MCF 10A (cell line): ENCODE measurements at regions of chr3 and their contacts with region 1.

Region 1: GRCh38 chr3:142723968-142724681 is at the start of gene TRPC1:
- DNase-seq: peak; percentile 83
- H3K4me3 Mint-ChIP-seq: peak within 1 kb of the TSS; percentile 91
- H3K27ac Mint-ChIP-seq: peak within 1 kb of the TSS; percentile 86
- H3K4me1 Mint-ChIP-seq: peaks cover 7% of the 10 kb centered on the region
- H3K27me3 Mint-ChIP-seq: no peaks in the 10 kb centered on the region
- CTCF ChIP-seq: no peak
- total RNA-seq, gene TRPC1: 9.2 and 15.2 TPM in 2 replicates

Region 2: DNA sequence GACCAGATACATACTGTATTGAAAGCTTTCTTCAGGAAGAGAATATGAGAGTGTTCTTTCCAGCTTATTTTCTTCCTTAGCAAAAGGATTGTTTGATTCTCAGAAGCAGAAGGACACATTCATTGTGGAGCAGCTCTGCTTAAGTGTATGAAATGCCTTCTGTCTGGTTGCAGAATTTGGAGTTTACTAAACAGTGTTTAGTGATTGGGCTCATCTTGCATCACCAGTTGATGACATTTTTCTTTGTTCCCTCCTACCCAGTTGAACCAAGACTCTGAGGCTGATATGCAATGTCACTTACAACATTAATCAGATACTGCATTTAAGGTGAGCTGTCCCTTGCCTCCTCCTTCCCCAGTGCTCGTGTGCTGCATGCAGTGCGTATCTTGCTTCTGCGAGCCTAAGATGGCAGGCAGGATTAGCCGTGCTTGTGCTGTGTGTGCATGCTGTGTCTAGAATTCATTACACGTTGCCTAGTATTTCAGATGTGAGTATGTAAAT is 1337.5 kb before region 1 on chr3:
- CTCF ChIA-PET with region 1: no interaction called
- POLR2A ChIA-PET with region 1: no interaction called
- intact Hi-C with region 1: no loop called
- DNase-seq: no peak
- H3K4me3 Mint-ChIP-seq: peak overlapping the region; percentile 28
- H3K27ac Mint-ChIP-seq: peak overlapping the region; percentile 73
- H3K4me1 Mint-ChIP-seq: peaks cover 46% of the 10 kb centered on the region
- H3K27me3 Mint-ChIP-seq: no peaks in the 10 kb centered on the region
- CTCF ChIP-seq: no peak

Region 3: GRCh38 chr3:142356818-142357217 is 367.3 kb before region 1 on chr3:
- CTCF ChIA-PET with region 1: no interaction called
- POLR2A ChIA-PET with region 1: no interaction called
- intact Hi-C with region 1: no loop called
- DNase-seq: no peak
- H3K4me3 Mint-ChIP-seq: no peak overlapping the region
- H3K27ac Mint-ChIP-seq: no peak overlapping the region
- H3K4me1 Mint-ChIP-seq: no peaks in the 10 kb centered on the region
- H3K27me3 Mint-ChIP-seq: no peaks in the 10 kb centered on the region
- CTCF ChIP-seq: no peak

Region 4: GRCh38 chr3:142568393-142569017 is 155.6 kb before region 1 on chr3:
- CTCF ChIA-PET with region 1: no interaction called
- POLR2A ChIA-PET with region 1: no interaction called
- intact Hi-C with region 1: no loop called
- DNase-seq: no peak
- H3K4me3 Mint-ChIP-seq: no peak overlapping the region
- H3K27ac Mint-ChIP-seq: no peak overlapping the region
- H3K4me1 Mint-ChIP-seq: no peaks in the 10 kb centered on the region
- H3K27me3 Mint-ChIP-seq: no peaks in the 10 kb centered on the region
- CTCF ChIP-seq: no peak

Region 5: DNA sequence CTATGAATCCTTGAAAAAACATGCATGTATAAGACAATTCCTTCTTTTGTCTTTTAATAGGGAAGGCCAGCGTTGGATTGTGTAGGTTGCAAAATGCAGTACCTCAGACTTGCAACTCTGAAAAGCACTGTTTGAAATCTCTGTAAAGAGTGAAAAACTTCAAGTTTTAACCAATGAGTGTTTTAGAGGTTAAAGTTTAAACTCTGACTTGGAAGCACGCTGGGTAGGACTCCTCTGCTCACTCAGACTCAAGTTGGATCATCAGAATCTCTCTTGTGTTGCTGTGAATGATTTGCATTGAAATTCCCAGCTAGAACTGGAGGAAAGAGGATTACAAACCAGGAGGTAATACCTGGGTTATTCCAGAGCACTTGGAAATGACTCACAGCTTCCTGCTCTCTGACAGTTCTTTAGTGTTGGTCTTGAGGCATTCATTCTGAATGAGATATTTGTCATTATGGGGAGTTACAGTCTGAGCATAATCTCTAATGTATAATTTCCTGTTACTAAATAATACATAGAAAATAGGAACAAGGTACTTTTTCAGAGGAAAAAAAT is 78.8 kb before region 1 on chr3:
- CTCF ChIA-PET with region 1: no interaction called
- POLR2A ChIA-PET with region 1: interaction called, 13 read pairs
- intact Hi-C with region 1: no loop called
- DNase-seq: peak; percentile 80
- H3K4me3 Mint-ChIP-seq: no peak overlapping the region
- H3K27ac Mint-ChIP-seq: no peak overlapping the region
- H3K4me1 Mint-ChIP-seq: peaks cover 28% of the 10 kb centered on the region
- H3K27me3 Mint-ChIP-seq: no peaks in the 10 kb centered on the region
- CTCF ChIP-seq: no peak

Region 6: DNA sequence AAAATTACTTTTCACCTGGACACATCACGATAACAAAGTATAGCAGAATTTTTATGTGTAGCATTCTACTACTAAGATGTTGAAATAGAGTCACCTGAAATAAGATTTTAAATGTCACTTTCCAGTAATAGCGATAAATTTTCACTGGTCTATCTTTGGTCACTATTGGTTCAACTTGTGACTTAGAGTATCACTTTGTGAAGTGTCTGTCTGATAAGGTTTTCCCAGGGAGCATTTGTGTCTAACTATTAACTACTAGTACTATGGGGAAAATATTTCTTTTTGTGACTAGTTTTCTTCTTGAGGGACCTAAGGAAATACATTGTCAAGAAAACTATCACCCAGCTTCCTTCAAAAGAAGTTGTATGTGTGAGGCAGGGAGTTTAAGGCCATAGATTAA is 10.7 kb after region 1 on chr3:
- CTCF ChIA-PET with region 1: interaction called, 4 read pairs
- POLR2A ChIA-PET with region 1: interaction called, 10 read pairs
- intact Hi-C with region 1: no loop called
- DNase-seq: no peak
- H3K4me3 Mint-ChIP-seq: no peak overlapping the region
- H3K27ac Mint-ChIP-seq: no peak overlapping the region
- H3K4me1 Mint-ChIP-seq: no peaks in the 10 kb centered on the region
- H3K27me3 Mint-ChIP-seq: no peaks in the 10 kb centered on the region
- CTCF ChIP-seq: no peak

Region 7: DNA sequence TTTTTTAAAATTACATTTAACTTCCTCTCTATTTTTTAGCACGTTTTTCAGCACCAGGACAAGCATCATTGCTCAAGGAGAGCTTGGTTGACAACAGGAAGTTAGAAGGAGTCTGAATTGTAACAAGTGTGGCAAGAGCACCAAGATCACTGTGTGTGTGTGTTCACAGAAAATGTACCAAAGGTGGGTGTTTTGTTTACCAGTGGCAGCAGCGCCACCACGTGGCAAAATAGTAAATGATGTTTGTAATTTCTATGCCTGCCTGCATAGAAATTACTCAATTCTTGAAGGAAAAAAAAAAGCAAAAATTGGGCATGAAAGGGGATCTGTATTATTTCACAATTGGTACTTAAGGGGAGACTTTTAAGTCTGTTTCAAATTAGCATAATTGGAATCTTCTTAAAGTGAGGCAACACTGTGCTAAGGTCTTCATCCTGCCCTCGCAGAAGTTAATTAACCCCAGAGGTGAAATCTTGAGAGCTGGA is 269.9 kb after region 1 on chr3:
- CTCF ChIA-PET with region 1: interaction called, 6 read pairs
- POLR2A ChIA-PET with region 1: no interaction called
- intact Hi-C with region 1: loop called (anchors 10 kb)
- DNase-seq: peak; percentile 85
- H3K4me3 Mint-ChIP-seq: no peak overlapping the region
- H3K27ac Mint-ChIP-seq: no peak overlapping the region
- H3K4me1 Mint-ChIP-seq: no peaks in the 10 kb centered on the region
- H3K27me3 Mint-ChIP-seq: no peaks in the 10 kb centered on the region
- CTCF ChIP-seq: peak; percentile 65